Naive thymus-derived CD4-positive, alpha-beta T cell (primary cell): ENCODE measurements at regions of chr20 and their contacts with region 1.

Region 1: GRCh38 chr20:44576297-44576696 is 6.1 kb upstream of the PKIG start:
- DNase-seq: peak in 3 of 9 donors; percentile 3 to 27 (median 4)
- ATAC-seq: peak; percentile 69
- H3K4me3 ChIP-seq: no peak overlapping the region
- H3K4me3 Mint-ChIP-seq: no peak overlapping the region
- H3K27ac ChIP-seq: no peak overlapping the region
- H3K27ac Mint-ChIP-seq: peak overlapping the region in 3 of 9 donors; percentile 6 to 68 (median 51)
- H3K4me1 ChIP-seq: peaks cover 0 to 4% of the 10 kb centered on the region in 2 donors
- H3K4me1 Mint-ChIP-seq: peaks cover 0 to 30% (median 11%) of the 10 kb centered on the region in 7 donors
- H3K27me3 ChIP-seq: no peaks in the 10 kb centered on the region
- H3K27me3 Mint-ChIP-seq: no peaks in the 10 kb centered on the region

Region 2: DNA sequence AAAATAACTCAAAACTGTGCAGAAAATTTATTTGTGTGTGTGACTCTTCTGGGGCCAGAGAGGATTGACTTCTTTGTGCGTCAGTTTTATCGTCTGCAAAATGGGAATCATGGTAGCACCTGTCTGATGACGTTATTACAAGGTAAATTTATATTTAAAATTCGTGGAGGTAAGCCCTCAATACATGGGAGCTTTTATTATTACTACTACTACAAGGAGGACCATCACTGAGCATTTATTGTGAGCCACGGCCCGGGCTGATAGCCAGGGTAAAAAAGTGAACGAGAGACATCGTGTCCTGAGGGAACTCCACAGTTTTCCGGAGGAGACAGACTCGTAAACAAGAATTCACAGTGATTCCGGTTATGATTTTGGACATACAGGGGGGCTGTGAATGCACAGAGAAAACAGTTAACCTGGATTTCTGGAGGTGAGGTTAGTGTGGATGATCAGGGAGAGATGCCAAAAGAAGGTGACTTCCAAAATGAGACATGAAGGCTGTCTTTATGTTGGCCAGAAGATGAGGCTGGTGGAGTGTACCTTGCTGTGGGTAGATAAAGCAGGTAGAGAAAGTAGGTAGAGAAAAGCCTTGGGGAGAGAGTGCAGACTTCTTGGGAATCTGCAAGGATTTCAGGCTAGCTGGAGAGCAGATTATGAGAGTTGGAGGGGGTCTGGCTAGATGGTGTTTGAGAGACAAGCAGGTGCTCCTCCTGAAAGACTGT is 43.9 kb before region 1 on chr20:
- CTCF ChIA-PET with region 1: no interaction called
- POLR2A ChIA-PET with region 1: no interaction called
- intact Hi-C with region 1: loop called in 1 of 2 experiments (anchors 5 kb)
- DNase-seq: peak in 2 of 9 donors; percentile 15 to 20
- ATAC-seq: peak; percentile 6
- H3K4me3 ChIP-seq: peak overlapping the region; percentile 83
- H3K4me3 Mint-ChIP-seq: no peak overlapping the region
- H3K27ac ChIP-seq: peak overlapping the region; percentile 71
- H3K27ac Mint-ChIP-seq: no peak overlapping the region
- H3K4me1 ChIP-seq: peaks cover 5 to 19% of the 10 kb centered on the region in 2 donors
- H3K4me1 Mint-ChIP-seq: peaks cover 0 to 8% (median 4%) of the 10 kb centered on the region in 7 donors
- H3K27me3 ChIP-seq: no peaks in the 10 kb centered on the region
- H3K27me3 Mint-ChIP-seq: peaks cover 0 to 11% (median 0%) of the 10 kb centered on the region in 5 donors

Region 3: DNA sequence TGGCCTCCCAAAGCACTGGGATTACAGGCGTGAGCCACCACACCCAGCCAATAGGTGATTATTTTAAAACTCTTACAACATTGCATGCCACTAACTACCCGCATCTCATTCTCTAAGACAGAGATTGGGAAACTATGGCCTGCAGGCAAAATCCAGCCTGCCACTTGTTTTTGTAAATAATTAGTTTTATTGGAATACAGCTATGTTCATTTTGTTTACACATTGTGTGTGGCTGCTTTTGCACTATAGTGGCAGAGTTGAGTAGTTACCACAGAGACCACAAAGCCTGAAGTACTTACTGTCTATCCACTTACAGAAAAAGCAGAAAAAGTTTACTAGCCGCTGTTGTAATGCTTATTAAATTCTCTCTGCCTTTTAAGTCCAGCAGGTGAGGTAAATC is 10.3 kb before region 1 on chr20:
- CTCF ChIA-PET with region 1: no interaction called
- POLR2A ChIA-PET with region 1: no interaction called
- intact Hi-C with region 1: no loop called
- DNase-seq: no peak
- ATAC-seq: no peak
- H3K4me3 ChIP-seq: no peak overlapping the region
- H3K4me3 Mint-ChIP-seq: no peak overlapping the region
- H3K27ac ChIP-seq: no peak overlapping the region
- H3K27ac Mint-ChIP-seq: no peak overlapping the region
- H3K4me1 ChIP-seq: no peaks in the 10 kb centered on the region
- H3K4me1 Mint-ChIP-seq: peaks cover 0 to 10% (median 5%) of the 10 kb centered on the region in 7 donors
- H3K27me3 ChIP-seq: no peaks in the 10 kb centered on the region
- H3K27me3 Mint-ChIP-seq: peaks cover 0 to 7% (median 0%) of the 10 kb centered on the region in 5 donors

Region 4: DNA sequence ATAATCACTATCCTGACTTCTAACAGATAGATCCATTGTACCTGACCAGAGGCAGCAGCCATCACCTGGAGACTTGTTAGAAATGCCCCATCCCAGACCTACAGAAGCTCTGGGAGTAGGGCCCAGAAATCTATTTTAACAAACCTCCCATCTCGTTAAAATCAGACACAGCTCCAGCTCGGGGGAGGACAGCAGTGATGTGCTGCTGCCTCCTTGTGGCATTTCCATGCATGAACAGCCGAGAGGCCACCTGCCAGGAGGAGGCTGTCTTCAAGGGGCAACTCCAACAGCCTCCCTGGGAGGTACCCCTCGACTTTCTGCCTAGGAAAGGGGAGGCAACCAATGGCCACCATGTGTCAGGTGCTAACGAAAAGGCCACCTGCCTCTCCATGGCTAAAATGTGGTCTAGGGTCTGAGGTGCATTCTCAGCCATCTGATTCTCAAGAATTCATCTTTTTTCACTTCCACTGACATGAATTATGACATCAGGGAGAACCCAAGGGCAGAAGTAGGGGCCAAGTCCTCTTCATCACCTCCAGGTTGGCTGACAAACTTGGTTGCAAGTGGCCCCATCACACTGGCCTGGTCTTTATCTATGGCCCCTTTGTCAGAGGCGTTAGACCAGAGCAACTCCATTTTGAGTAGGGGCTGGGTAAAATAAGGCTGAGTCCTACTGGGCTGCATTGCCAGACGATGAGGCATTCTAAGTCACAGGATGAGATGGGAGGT is 157.2 kb after region 1 on chr20:
- CTCF ChIA-PET with region 1: no interaction called
- POLR2A ChIA-PET with region 1: no interaction called
- intact Hi-C with region 1: loop called in 1 of 2 experiments (anchors 1 kb)
- DNase-seq: peak; percentile 34 to 73 (median 57)
- ATAC-seq: peak; percentile 77
- H3K4me3 ChIP-seq: no peak overlapping the region
- H3K4me3 Mint-ChIP-seq: no peak overlapping the region
- H3K27ac ChIP-seq: no peak overlapping the region
- H3K27ac Mint-ChIP-seq: peak overlapping the region in 1 of 9 donors; percentile 32
- H3K4me1 ChIP-seq: no peaks in the 10 kb centered on the region
- H3K4me1 Mint-ChIP-seq: peaks cover 11 to 23% (median 20%) of the 10 kb centered on the region in 7 donors
- H3K27me3 ChIP-seq: no peaks in the 10 kb centered on the region
- H3K27me3 Mint-ChIP-seq: no peaks in the 10 kb centered on the region

Region 5: GRCh38 chr20:45290677-45291355 is 714.5 kb after region 1 on chr20:
- CTCF ChIA-PET with region 1: no interaction called
- POLR2A ChIA-PET with region 1: no interaction called
- intact Hi-C with region 1: no loop called
- DNase-seq: peak; percentile 12 to 64 (median 49)
- ATAC-seq: peak; percentile 58
- H3K4me3 ChIP-seq: no peak overlapping the region
- H3K4me3 Mint-ChIP-seq: no peak overlapping the region
- H3K27ac ChIP-seq: no peak overlapping the region
- H3K27ac Mint-ChIP-seq: no peak overlapping the region
- H3K4me1 ChIP-seq: peaks cover 4 to 14% of the 10 kb centered on the region in 2 donors
- H3K4me1 Mint-ChIP-seq: peaks cover 4 to 18% (median 11%) of the 10 kb centered on the region in 7 donors
- H3K27me3 ChIP-seq: peaks cover 0 to 10% of the 10 kb centered on the region in 2 donors
- H3K27me3 Mint-ChIP-seq: peaks cover 31 to 49% (median 38%) of the 10 kb centered on the region in 5 donors